H1 (cell line): ENCODE measurements at regions of chr1 and their contacts with region 1.

Region 1: GRCh38 chr1:33055210-33056008 is 18.7 kb upstream of the AK2 start:
- DNase-seq: peak; percentile 46 to 60
- H3K4me3 ChIP-seq: no peak overlapping the region
- H3K27ac ChIP-seq: no peak overlapping the region
- H3K4me1 ChIP-seq: no peaks in the 10 kb centered on the region
- H3K27me3 ChIP-seq: no peaks in the 10 kb centered on the region; a peak in 1 of 7 replicates
- CTCF ChIP-seq: peak; percentile 49 to 89 (median 83)
- EP300 ChIP-seq: no peak
- POLR2A ChIP-seq: no peak
- RAD21 ChIP-seq: peak; percentile 66 to 73

Region 2: GRCh38 chr1:32817159-32817814 is 238.1 kb before region 1 on chr1 and contains the starts of genes S100PBP and YARS1:
- CTCF ChIA-PET with region 1: no interaction called
- POLR2A ChIA-PET with region 1: no interaction called
- DNase-seq: peak; percentile 97 to 100
- H3K4me3 ChIP-seq: peak within 1 kb of the TSS; percentile 81 to 99 (median 93)
- H3K27ac ChIP-seq: peak within 1 kb of the TSS; percentile 95
- H3K4me1 ChIP-seq: peaks cover 0 to 7% (median 4%) of the 10 kb centered on the region in 4 experiments; a peak in 3 of 7 replicates
- H3K27me3 ChIP-seq: no peaks in the 10 kb centered on the region
- CTCF ChIP-seq: no peak
- EP300 ChIP-seq: peak in 1 of 2 experiments; percentile 96; a peak in 2 of 3 replicates
- POLR2A ChIP-seq: peak in 1 of 2 experiments; percentile 65; a peak in 2 of 3 replicates
- RAD21 ChIP-seq: no peak
- total RNA-seq, gene S100PBP: 65.7 and 68.3 TPM in 2 replicates
- total RNA-seq, gene YARS1: 226 and 230 TPM in 2 replicates

Region 3: GRCh38 chr1:32876341-32877210 is 178.8 kb before region 1 on chr1:
- CTCF ChIA-PET with region 1: interaction called, 16 read pairs
- POLR2A ChIA-PET with region 1: no interaction called
- DNase-seq: peak in 1 of 2 experiments; percentile 89
- H3K4me3 ChIP-seq: peak overlapping the region in 1 of 4 experiments; percentile 25; a peak in 1 of 8 replicates
- H3K27ac ChIP-seq: no peak overlapping the region
- H3K4me1 ChIP-seq: peaks cover 6 to 30% (median 15%) of the 10 kb centered on the region in 4 experiments
- H3K27me3 ChIP-seq: peaks cover 0 to 7% (median 7%) of the 10 kb centered on the region in 4 experiments; a peak in 6 of 7 replicates
- CTCF ChIP-seq: peak; percentile 93 to 99 (median 99)
- EP300 ChIP-seq: no peak
- POLR2A ChIP-seq: no peak
- RAD21 ChIP-seq: peak; percentile 62 to 75

Region 4: DNA sequence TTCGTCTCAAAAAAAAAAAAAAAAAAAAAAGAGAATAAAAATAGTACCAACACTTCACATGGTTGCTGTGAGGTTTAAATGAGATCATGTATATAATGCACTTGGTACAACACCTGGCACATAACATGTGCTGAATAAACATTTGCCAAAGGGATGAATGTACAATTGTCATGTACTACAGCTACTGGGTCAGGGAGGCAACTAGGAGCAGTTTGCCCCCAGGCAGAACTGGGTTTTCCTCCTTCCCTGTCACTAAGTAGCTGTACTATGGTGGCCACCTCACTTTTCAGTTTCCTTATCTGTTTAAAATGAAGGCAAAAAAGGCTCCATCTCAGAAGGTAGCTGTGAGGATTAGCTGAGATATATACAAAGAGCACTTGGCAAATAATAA is 30.2 kb before region 1 on chr1:
- CTCF ChIA-PET with region 1: interaction called, 14 read pairs
- POLR2A ChIA-PET with region 1: no interaction called
- DNase-seq: no peak
- H3K4me3 ChIP-seq: no peak overlapping the region
- H3K27ac ChIP-seq: no peak overlapping the region
- H3K4me1 ChIP-seq: peaks cover 0 to 3% (median 0%) of the 10 kb centered on the region in 4 experiments; a peak in 4 of 7 replicates
- H3K27me3 ChIP-seq: no peaks in the 10 kb centered on the region
- CTCF ChIP-seq: no peak
- EP300 ChIP-seq: no peak
- POLR2A ChIP-seq: no peak
- RAD21 ChIP-seq: no peak

Region 5: DNA sequence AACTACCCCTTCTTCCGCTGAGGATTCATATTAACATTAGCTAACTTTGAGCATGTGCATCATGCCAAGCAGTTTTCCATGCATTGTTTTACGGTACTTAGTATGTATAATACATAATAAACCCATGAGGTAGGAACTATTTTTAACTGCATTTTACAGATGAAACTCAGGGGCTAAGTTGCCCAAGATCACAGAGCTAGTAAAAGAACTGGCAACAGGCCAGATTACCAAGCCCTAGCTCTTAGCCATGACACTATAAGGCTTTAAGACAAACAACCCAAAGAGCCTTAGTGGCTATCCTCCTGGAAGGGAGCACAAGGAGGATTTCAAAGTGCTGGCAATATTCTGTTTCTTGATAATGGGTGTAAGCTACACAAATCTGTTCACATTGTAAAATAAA is 24.8 kb before region 1 on chr1:
- CTCF ChIA-PET with region 1: interaction called, 14 read pairs
- POLR2A ChIA-PET with region 1: no interaction called
- DNase-seq: no peak
- H3K4me3 ChIP-seq: no peak overlapping the region
- H3K27ac ChIP-seq: no peak overlapping the region
- H3K4me1 ChIP-seq: peaks cover 0 to 3% (median 2%) of the 10 kb centered on the region in 4 experiments; a peak in 5 of 7 replicates
- H3K27me3 ChIP-seq: no peaks in the 10 kb centered on the region
- CTCF ChIP-seq: no peak
- EP300 ChIP-seq: no peak
- POLR2A ChIP-seq: no peak
- RAD21 ChIP-seq: no peak

Region 6: GRCh38 chr1:33045246-33045645 is 10.2 kb before region 1 on chr1:
- CTCF ChIA-PET with region 1: interaction called, 28 read pairs
- POLR2A ChIA-PET with region 1: interaction called, 3 read pairs
- DNase-seq: no peak
- H3K4me3 ChIP-seq: no peak overlapping the region
- H3K27ac ChIP-seq: no peak overlapping the region
- H3K4me1 ChIP-seq: peaks cover 0 to 3% (median 1%) of the 10 kb centered on the region in 4 experiments; a peak in 2 of 7 replicates
- H3K27me3 ChIP-seq: no peaks in the 10 kb centered on the region
- CTCF ChIP-seq: no peak
- EP300 ChIP-seq: no peak
- POLR2A ChIP-seq: no peak
- RAD21 ChIP-seq: no peak

Region 7: GRCh38 chr1:33072707-33073106 is 17.3 kb after region 1 on chr1:
- CTCF ChIA-PET with region 1: interaction called, 29 read pairs
- POLR2A ChIA-PET with region 1: interaction called, 3 read pairs
- DNase-seq: no peak
- H3K4me3 ChIP-seq: no peak overlapping the region
- H3K27ac ChIP-seq: no peak overlapping the region
- H3K4me1 ChIP-seq: no peaks in the 10 kb centered on the region
- H3K27me3 ChIP-seq: no peaks in the 10 kb centered on the region; a peak in 1 of 7 replicates
- CTCF ChIP-seq: no peak
- EP300 ChIP-seq: no peak
- POLR2A ChIP-seq: no peak
- RAD21 ChIP-seq: no peak

Region 8: DNA sequence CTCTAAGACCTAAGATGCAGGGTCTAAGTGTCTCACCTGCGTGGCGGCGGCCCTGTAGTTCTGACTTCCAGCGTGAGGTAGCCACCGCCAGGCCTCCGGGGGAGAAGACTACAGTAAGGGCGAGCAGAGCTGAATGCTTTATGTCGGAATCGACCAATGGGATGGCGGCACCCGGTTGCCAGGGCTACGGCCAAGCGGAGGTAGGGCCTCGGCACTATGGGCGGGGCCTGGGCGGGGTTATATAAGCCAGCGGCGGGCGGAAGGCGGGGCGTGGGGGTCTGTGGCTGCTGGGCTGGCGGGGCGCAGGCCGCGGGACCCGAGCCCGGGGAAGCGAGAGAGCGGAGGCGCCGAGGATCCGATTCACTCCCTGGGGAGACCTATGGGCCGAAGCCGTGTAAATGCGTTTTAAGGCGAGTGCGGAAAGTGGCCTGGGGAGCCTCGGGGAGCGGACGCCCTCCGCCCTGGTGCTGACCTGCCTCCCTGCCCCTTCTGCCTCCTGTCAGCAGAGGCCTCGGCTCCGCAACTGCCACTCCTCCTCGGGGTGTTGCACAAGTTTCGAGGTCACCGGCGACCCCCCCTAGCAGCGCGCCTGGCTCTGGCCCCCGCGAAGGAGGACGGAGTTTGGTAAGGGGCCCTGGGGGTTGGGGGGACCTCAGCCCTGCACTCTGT is 25.6 kb after region 1 on chr1 and contains the start of gene AZIN2:
- CTCF ChIA-PET with region 1: interaction called, 41 read pairs
- POLR2A ChIA-PET with region 1: no interaction called
- DNase-seq: peak; percentile 80 to 100
- H3K4me3 ChIP-seq: peak within 1 kb of the TSS; percentile 43 to 63 (median 58)
- H3K27ac ChIP-seq: no peak within 1 kb of the TSS
- H3K4me1 ChIP-seq: peaks cover 0 to 5% (median 4%) of the 10 kb centered on the region in 4 experiments; a peak in 4 of 7 replicates
- H3K27me3 ChIP-seq: peaks cover 10 to 48% (median 37%) of the 10 kb centered on the region in 4 experiments
- CTCF ChIP-seq: no peak
- EP300 ChIP-seq: no peak
- POLR2A ChIP-seq: peak in 1 of 2 experiments; percentile 64; a peak in 2 of 3 replicates
- RAD21 ChIP-seq: peak in 1 of 2 experiments; percentile 15; a peak in 1 of 4 replicates
- total RNA-seq, gene AZIN2: 0.21 and 0.22 TPM in 2 replicates